Activated CD8-positive, alpha-beta memory T cell treated with anti-CD3 and anti-CD28 coated beads, Interleukin-2, amount 10 ng/mL, durations not matched to agents 7 days and 5 days (primary cell): ENCODE measurements at regions of chr15 and their contacts with region 1.

Region 1: GRCh38 chr15:73633111-73633990 is at the start of gene NPTN:
- DNase-seq: peak; percentile 99
- ATAC-seq: peak; percentile 97
- H3K4me3 Mint-ChIP-seq: peak within 1 kb of the TSS; percentile 74
- H3K27ac Mint-ChIP-seq: peak within 1 kb of the TSS; percentile 70
- H3K4me1 Mint-ChIP-seq: peaks cover 48% of the 10 kb centered on the region
- H3K27me3 Mint-ChIP-seq: peaks cover 27% of the 10 kb centered on the region
- total RNA-seq, gene NPTN: 45.5 to 54.0 TPM

Region 2: GRCh38 chr15:73555080-73555479 is 78.3 kb before region 1 on chr15:
- CTCF ChIA-PET with region 1: interaction called, 117 read pairs
- DNase-seq: no peak
- ATAC-seq: no peak
- H3K4me3 Mint-ChIP-seq: no peak overlapping the region
- H3K27ac Mint-ChIP-seq: peak overlapping the region; percentile 3
- H3K4me1 Mint-ChIP-seq: peaks cover 3% of the 10 kb centered on the region
- H3K27me3 Mint-ChIP-seq: no peaks in the 10 kb centered on the region

Region 3: GRCh38 chr15:73582851-73583379 is 50.4 kb before region 1 on chr15:
- CTCF ChIA-PET with region 1: interaction called, 11 read pairs
- DNase-seq: no peak
- ATAC-seq: no peak
- H3K4me3 Mint-ChIP-seq: no peak overlapping the region
- H3K27ac Mint-ChIP-seq: peak overlapping the region; percentile 75
- H3K4me1 Mint-ChIP-seq: peaks cover 56% of the 10 kb centered on the region
- H3K27me3 Mint-ChIP-seq: no peaks in the 10 kb centered on the region

Region 4: GRCh38 chr15:73617301-73617831 is 16.0 kb before region 1 on chr15:
- CTCF ChIA-PET with region 1: interaction called, 28 read pairs
- DNase-seq: no peak
- ATAC-seq: no peak
- H3K4me3 Mint-ChIP-seq: no peak overlapping the region
- H3K27ac Mint-ChIP-seq: no peak overlapping the region
- H3K4me1 Mint-ChIP-seq: peaks cover 21% of the 10 kb centered on the region
- H3K27me3 Mint-ChIP-seq: no peaks in the 10 kb centered on the region

Region 5: DNA sequence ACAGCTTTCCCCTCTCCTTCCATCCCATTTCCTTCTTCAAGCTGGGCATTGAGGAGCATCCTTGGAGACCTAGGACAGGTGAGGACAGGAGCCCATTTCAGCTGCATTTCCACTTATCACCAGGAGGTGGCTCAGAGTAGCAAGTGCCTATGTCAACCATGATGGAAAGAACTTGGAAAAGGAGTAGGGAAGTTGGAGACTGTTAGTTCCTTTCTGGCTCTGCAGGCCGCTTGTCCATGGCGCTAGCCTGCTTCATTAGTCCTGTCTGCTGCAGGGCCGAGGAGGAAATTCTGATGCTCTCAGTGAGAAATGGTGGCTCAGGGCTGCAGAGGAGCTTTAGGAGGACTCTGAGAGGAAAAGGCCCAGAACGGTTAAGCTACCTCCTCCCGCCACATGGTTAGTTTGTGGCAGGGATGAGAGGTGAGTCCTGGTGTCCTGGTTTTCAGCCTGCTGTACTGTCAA is 43.8 kb after region 1 on chr15:
- CTCF ChIA-PET with region 1: interaction called, 52 read pairs
- DNase-seq: peak; percentile 56
- ATAC-seq: peak; percentile 61
- H3K4me3 Mint-ChIP-seq: no peak overlapping the region
- H3K27ac Mint-ChIP-seq: no peak overlapping the region
- H3K4me1 Mint-ChIP-seq: peaks cover 28% of the 10 kb centered on the region
- H3K27me3 Mint-ChIP-seq: peaks cover 51% of the 10 kb centered on the region

Region 6: GRCh38 chr15:73704869-73705645 is 71.7 kb after region 1 on chr15:
- CTCF ChIA-PET with region 1: interaction called, 233 read pairs
- DNase-seq: peak; percentile 81
- ATAC-seq: peak; percentile 75
- H3K4me3 Mint-ChIP-seq: no peak overlapping the region
- H3K27ac Mint-ChIP-seq: no peak overlapping the region
- H3K4me1 Mint-ChIP-seq: peaks cover 1% of the 10 kb centered on the region
- H3K27me3 Mint-ChIP-seq: peaks cover 25% of the 10 kb centered on the region

Region 7: DNA sequence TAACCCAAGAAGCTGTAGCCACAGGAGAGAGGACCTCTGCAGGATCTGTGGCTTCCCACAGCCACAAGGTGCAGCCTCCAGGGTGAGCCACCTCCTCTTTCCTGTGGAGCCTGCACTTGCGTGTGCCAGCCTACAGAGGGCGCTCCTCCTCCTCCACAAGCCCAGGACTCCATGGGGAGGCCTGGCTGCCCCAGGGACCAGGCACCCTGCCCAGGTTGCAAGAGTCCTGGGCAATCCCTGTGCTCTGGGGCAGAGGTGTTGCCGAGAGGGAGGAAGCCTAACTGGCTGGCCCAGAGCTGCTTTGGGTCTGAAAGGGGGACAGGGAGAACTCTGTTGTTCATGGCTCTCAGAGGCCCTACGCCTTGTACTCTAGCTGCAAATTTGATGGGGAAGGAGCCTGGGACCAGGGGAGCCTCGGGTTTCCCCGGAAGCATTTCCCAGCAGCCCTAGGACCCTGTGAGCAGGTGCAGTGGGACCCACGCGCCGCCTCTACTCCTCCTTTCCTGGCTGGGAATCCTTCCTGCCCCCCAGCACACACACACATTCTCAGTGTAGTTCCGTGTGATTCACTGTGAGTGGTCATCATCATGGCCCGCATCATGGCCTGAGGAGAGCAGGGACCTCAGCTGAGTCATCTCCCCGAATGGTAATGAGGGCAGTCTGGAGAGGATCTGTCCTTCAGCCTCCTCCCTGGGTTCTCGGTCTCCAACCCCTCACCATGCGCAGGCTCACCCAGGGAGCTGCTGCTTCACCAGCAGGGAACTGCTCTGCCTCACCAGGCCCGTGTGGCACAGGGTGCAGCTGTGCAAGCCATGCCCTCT is 264.3 kb after region 1 on chr15:
- CTCF ChIA-PET with region 1: no interaction called
- DNase-seq: peak; percentile 90
- ATAC-seq: peak; percentile 94
- H3K4me3 Mint-ChIP-seq: no peak overlapping the region
- H3K27ac Mint-ChIP-seq: no peak overlapping the region
- H3K4me1 Mint-ChIP-seq: peaks cover 15% of the 10 kb centered on the region
- H3K27me3 Mint-ChIP-seq: peaks cover 10% of the 10 kb centered on the region